ENCODE measurements at regions of chr2 and their contacts with region 1.

Region 1: DNA sequence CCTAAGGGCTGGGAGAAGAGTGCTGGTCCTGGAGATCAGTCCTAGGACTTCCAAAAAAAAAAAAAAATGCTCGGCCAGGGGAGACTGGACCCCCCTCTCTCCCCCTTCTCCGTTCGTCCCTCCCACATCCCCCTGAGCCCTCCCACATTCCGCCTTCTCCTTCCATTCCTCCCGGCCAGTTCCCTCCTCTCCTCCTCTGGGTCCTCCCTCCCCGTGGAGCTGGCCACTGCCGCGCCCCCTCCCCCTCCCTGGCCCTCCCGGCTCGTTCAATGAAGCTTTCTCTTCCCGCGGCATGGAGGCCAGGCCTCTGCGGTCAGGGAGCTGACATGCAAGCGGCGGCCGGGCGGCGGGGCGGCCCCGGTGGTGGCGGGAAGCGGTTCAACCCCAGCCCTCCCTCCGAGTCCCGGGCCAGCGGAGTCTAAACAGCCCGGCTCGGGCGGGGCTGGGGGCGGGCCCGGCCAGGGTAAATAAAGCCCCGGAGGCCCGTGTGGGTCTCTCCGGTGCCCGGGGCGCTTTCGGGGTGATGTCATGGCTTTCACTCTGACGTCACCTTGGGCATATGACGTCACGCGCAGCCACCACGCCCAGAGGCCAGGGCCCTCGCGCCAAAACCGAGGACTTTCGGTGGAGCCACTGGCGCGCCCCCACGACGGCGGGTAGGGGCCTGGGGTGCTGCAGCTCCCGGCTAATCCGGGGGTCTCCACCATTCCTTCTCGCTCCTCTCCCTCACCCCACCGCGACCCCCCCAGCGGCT is at the start of gene LOXL3:
- DNase-seq: peak; percentile 69
- H3K4me3 ChIP-seq: peak within 1 kb of the TSS; percentile 94
- H3K27ac ChIP-seq: no peak within 1 kb of the TSS
- H3K4me1 ChIP-seq: peaks cover 13% of the 10 kb centered on the region
- CTCF ChIP-seq: no peak
- total RNA-seq, gene LOXL3: 0.72 and 0.98 TPM in 2 replicates

Region 2: GRCh38 chr2:74653985-74654882 is 100.2 kb after region 1 on chr2 and contains the start of gene SEMA4F:
- CTCF ChIA-PET with region 1: interaction called, 17 read pairs
- POLR2A ChIA-PET with region 1: no interaction called
- intact Hi-C with region 1: no loop called
- DNase-seq: peak; percentile 94
- H3K4me3 ChIP-seq: peak within 1 kb of the TSS; percentile 72
- H3K27ac ChIP-seq: no peak within 1 kb of the TSS
- H3K4me1 ChIP-seq: peaks cover 5% of the 10 kb centered on the region
- CTCF ChIP-seq: no peak
- total RNA-seq, gene SEMA4F: 2.3 and 3.4 TPM in 2 replicates

Measured in OCI-LY7 (cell line).